ENCODE measurements at regions of chr7 and their contacts with region 1.

Region 1: DNA sequence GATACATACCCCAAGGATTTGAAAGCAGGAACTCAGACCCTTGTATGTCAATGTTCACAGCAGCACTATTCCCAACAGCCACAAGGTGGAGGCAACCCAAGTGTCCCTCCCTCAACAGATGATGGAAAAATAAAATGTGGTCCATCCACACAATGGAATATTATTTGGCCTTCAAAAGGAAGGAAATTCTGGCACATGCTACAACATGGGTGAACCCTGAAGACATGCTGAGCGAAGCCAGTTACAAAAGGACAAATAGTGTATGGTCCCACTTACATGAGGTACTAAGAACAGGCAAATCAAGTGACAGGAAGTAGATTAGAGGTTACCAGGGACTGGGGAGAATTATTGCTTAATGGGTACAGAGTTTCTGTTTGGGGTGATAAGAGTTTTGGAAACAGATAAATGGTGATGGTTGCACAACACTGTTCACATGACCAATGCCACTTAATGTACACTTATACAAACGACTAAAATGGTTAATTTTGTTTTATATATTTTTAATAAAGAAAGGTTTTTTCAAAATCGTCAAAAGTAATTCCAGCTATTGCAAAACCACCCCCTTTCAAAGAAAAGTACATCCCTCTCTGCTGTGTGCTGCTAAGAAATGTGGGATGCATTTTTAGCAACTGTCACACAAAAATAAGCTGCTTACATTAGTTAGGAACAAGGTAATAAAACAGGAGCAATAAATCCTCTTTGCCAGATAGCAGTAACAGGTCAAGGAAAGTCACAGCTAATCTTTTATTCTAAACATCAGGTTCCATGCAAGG is 85.7 kb downstream of the GRB10 start:
- DNase-seq: peak; percentile 8
- ATAC-seq: peak; percentile 84
- H3K4me3 ChIP-seq: no peak overlapping the region
- H3K27ac ChIP-seq: no peak overlapping the region
- H3K4me1 ChIP-seq: no peaks in the 10 kb centered on the region
- H3K27me3 ChIP-seq: no peaks in the 10 kb centered on the region
- CTCF ChIP-seq: peak; percentile 38 to 72 (median 67); a peak in 5 of 6 replicates
- POLR2A ChIP-seq: no peak
- RAD21 ChIP-seq: peak; percentile 56

Region 2: DNA sequence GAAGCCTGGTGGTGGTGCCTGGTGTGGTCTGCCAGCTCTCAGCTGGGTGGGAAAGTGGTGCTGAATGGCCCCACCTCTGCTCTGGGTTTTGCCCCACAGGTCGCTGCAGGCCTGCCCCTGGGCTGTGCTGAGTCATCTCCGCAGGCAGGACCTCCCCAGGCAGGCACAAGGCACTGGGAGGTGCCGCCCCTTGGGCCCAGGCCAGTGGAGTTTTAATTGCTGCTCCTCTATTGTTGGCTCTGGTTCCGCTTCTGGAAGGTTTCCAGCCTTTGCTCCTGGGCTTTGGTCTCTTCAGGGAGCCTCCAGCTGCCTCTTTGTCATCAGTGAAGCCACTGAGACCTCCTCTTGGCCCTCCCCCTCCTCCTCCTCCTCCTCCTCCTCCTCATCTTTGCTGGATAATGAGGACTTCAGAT is 266.0 kb after region 1 on chr7:
- CTCF ChIA-PET with region 1: no interaction called
- POLR2A ChIA-PET with region 1: no interaction called
- RAD21 ChIA-PET with region 1: no interaction called
- intact Hi-C with region 1: no loop called
- DNase-seq: peak; percentile 86
- ATAC-seq: peak; percentile 96
- H3K4me3 ChIP-seq: peak overlapping the region in 1 of 2 experiments; percentile 42; a peak in 2 of 4 replicates
- H3K27ac ChIP-seq: peak overlapping the region; percentile 59
- H3K4me1 ChIP-seq: peaks cover 24 to 31% of the 10 kb centered on the region in 2 experiments
- H3K27me3 ChIP-seq: no peaks in the 10 kb centered on the region
- CTCF ChIP-seq: 0 out of 6 replicates have a peak, but pooled peaks of 1 of the 3 experiments have one; percentile 5
- POLR2A ChIP-seq: no peak
- RAD21 ChIP-seq: peak; percentile 22; the same call in 1 of the 2 replicates

Region 3: GRCh38 chr7:50982626-50983025 is 285.6 kb after region 1 on chr7:
- CTCF ChIA-PET with region 1: no interaction called
- POLR2A ChIA-PET with region 1: no interaction called
- RAD21 ChIA-PET with region 1: no interaction called
- intact Hi-C with region 1: loop called (anchors 10 kb)
- DNase-seq: no peak
- ATAC-seq: peak; percentile 63
- H3K4me3 ChIP-seq: no peak overlapping the region
- H3K27ac ChIP-seq: no peak overlapping the region
- H3K4me1 ChIP-seq: no peaks in the 10 kb centered on the region
- H3K27me3 ChIP-seq: no peaks in the 10 kb centered on the region
- CTCF ChIP-seq: no peak
- POLR2A ChIP-seq: no peak
- RAD21 ChIP-seq: no peak

Region 4: DNA sequence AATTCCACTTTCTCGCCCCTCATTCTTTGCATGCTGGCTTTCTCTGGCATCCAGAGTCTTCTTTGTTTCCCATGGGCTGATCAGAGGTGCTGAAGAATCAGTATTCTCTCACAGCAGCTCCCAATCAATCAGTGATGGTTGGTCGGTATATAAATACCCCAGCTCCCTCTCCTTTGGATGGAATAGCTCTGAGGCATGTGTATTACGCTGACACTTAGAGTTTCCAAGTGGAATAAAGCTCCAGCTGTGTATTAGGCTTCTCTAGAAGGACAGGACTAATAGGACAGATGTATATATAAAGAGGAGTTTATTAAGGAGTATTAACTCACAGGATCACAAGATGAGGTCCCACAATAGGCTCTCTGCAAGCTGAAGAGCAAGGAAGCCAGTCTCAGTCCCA is 304.0 kb after region 1 on chr7:
- CTCF ChIA-PET with region 1: no interaction called
- POLR2A ChIA-PET with region 1: no interaction called
- RAD21 ChIA-PET with region 1: no interaction called
- intact Hi-C with region 1: loop called (anchors 5 kb)
- DNase-seq: no peak
- ATAC-seq: peak; percentile 59; the same call in 1 of the 2 replicates
- H3K4me3 ChIP-seq: no peak overlapping the region
- H3K27ac ChIP-seq: no peak overlapping the region
- H3K4me1 ChIP-seq: no peaks in the 10 kb centered on the region
- H3K27me3 ChIP-seq: no peaks in the 10 kb centered on the region
- CTCF ChIP-seq: peak in 2 of 3 experiments; percentile 6 to 22; a peak in 1 of 6 replicates
- POLR2A ChIP-seq: no peak
- RAD21 ChIP-seq: peak; percentile 27; the same call in 1 of the 2 replicates

Region 5: DNA sequence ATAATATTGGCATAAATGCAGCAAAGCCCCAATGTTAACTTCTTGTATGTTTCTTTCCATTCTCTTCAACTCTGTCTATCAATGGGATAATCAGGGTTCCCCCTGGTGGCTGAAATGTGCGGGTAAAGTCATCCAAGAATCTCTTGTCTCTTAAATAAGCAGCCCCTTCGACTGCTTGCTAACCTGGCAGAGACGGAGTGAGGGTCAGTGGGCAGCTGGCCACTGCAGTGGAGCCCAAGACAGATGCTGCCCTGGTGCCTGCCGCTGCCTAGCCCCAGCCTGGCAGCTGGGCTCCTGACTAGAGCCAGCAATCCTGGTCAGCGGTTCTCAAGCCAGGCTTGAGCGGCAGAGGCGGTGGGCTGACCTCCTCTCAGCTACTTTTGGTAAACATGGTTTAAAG is 370.8 kb after region 1 on chr7:
- CTCF ChIA-PET with region 1: no interaction called
- POLR2A ChIA-PET with region 1: no interaction called
- RAD21 ChIA-PET with region 1: no interaction called
- intact Hi-C with region 1: loop called (anchors 5 kb)
- DNase-seq: peak; percentile 35
- ATAC-seq: peak; percentile 83
- H3K4me3 ChIP-seq: no peak overlapping the region
- H3K27ac ChIP-seq: no peak overlapping the region
- H3K4me1 ChIP-seq: peaks cover 0 to 2% of the 10 kb centered on the region in 2 experiments; a peak in 1 of 4 replicates
- H3K27me3 ChIP-seq: no peaks in the 10 kb centered on the region
- CTCF ChIP-seq: peak; percentile 49 to 85 (median 77); a peak in 5 of 6 replicates
- POLR2A ChIP-seq: no peak
- RAD21 ChIP-seq: peak; percentile 69

Region 6: DNA sequence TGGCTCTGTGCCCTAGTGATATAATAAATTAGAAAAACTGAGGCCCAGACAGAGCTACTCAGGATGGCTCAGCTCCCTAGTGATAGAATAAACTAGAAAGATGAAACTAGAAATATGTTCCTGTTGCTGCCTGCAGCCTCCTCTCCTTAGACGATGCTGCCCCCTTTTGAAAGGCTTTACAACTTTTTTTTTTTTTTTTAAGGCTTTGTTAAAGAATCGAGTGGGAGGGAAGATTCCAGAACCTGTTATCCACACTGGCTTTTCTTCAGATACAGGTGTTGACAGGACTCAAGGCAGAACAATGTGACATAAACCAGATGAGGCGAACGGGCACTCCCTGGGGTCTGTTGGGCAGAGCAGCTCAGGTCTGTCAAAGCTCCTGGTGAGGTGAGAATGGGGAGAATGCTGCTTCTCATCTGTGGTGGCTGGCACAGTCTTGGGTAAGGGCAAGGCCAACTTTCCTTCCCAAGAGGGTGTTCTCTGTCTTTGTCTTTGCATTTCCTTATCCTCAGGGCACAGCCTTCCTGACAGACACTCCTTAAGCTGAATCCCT is 444.5 kb after region 1 on chr7:
- CTCF ChIA-PET with region 1: no interaction called
- POLR2A ChIA-PET with region 1: no interaction called
- RAD21 ChIA-PET with region 1: no interaction called
- intact Hi-C with region 1: loop called (anchors 1 kb)
- DNase-seq: no peak
- ATAC-seq: peak; percentile 46; the same call in 1 of the 2 replicates
- H3K4me3 ChIP-seq: no peak overlapping the region
- H3K27ac ChIP-seq: no peak overlapping the region
- H3K4me1 ChIP-seq: peaks cover 8 to 12% of the 10 kb centered on the region in 2 experiments
- H3K27me3 ChIP-seq: no peaks in the 10 kb centered on the region
- CTCF ChIP-seq: peak; percentile 44 to 60 (median 47); a peak in 5 of 6 replicates
- POLR2A ChIP-seq: no peak
- RAD21 ChIP-seq: peak; percentile 76

Measured in HCT116 (cell line).